ENCODE measurements at regions of chr15 and their contacts with region 1.

Region 1: GRCh38 chr15:64809649-64810496 is 15.6 kb downstream of the PIF1 start:
- DNase-seq: peak; percentile 79
- H3K4me3 Mint-ChIP-seq: no peak overlapping the region
- H3K27ac Mint-ChIP-seq: no peak overlapping the region
- H3K4me1 Mint-ChIP-seq: no peaks in the 10 kb centered on the region
- H3K27me3 Mint-ChIP-seq: no peaks in the 10 kb centered on the region
- CTCF ChIP-seq: peak; percentile 88

Region 2: DNA sequence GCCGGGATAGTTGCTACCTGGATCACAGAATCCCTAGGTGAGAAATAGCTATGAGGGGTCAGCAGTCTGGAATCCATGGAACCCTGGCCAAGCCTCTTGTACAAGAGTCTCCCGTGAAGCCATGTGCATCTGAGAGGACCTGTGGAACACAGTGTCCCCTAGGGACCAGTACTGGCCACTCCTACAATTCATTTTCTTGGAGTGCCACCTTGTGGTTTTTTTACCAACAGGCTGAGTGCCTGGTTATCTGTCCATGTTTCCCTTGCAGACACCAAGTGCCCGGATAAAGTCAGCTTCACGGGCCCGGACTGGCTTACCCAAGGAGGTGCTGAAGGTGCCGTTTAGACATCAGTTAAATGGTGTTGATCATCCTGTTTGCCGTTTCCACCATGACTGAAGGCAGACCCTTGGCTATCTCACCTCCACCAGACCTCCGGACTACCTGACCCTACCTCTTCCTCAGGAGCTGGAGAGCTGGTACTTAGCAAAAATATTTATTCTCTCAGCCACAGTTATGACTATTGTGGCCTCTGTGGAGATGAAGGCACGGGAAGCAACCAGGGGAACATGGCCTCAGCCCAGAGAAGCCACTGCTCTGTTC is 128.3 kb before region 1 on chr15:
- CTCF ChIA-PET with region 1: interaction called, 41 read pairs
- POLR2A ChIA-PET with region 1: no interaction called
- intact Hi-C with region 1: loop called (anchors 1 kb)
- DNase-seq: peak; percentile 68
- H3K4me3 Mint-ChIP-seq: no peak overlapping the region
- H3K27ac Mint-ChIP-seq: no peak overlapping the region
- H3K4me1 Mint-ChIP-seq: no peaks in the 10 kb centered on the region
- H3K27me3 Mint-ChIP-seq: no peaks in the 10 kb centered on the region
- CTCF ChIP-seq: peak; percentile 72

Region 3: DNA sequence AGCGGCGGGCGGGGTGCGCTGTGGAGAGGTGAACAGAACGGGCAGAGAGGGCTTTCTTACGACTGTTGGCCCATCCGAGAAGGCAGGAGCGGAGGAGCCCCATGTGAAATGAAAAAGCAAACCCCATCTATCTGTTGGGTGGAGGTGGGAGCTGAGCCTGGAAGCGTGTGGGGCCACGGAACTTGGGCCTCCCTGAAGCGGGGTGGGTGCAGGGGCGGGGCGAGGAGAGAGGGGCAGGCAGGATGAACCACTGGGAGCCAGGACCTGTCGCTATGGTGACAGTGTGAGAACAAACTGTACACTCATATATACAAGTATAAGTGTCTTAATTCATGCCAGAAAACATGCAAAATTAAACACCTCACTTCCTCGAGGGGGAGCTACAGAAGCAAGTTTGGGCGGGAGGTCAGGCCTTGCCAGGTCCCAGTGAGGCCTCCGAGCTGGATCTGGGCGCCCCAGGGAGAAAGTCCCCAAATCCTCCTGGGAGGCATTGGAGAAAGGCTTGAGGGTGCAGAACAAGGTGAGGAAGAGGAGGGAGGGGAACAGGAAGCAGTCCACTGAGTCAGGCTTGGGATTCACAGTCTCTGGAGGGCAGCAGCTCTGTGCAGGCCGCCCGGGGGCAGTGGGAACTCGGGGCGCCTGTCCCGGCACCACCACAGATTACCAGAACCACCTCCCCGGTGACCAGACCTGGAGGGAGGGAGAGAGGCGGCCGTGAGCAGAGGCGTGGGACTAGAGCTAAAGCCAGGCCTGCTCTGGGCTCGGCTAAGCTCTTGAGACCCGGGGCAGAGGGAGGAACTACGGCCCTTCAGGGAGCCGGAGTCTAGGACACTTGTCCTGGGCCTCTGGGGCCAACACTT is 69.3 kb before region 1 on chr15:
- CTCF ChIA-PET with region 1: interaction called, 45 read pairs
- POLR2A ChIA-PET with region 1: no interaction called
- intact Hi-C with region 1: no loop called
- DNase-seq: peak; percentile 66
- H3K4me3 Mint-ChIP-seq: no peak overlapping the region
- H3K27ac Mint-ChIP-seq: no peak overlapping the region
- H3K4me1 Mint-ChIP-seq: no peaks in the 10 kb centered on the region
- H3K27me3 Mint-ChIP-seq: no peaks in the 10 kb centered on the region
- CTCF ChIP-seq: no peak

Region 4: DNA sequence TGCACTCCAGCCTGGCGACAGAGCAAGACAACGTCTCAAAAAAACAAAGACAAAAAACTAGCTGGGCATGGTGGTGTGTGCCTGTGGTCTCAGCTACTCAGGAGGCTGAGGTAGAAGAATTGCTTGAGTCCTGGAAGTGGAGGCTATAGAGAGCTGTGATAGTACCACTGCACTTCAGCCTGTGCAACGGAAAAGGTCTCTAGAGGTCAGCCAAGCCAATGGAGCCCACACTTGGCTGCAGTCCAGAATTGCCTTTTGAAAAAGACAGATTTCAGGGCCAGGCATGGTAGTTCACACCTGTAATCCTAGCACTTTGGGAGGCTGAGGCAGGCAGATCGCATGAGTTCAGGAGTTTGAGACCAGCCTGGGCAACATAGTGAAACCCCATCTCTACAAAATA is 26.1 kb before region 1 on chr15:
- CTCF ChIA-PET with region 1: interaction called, 10 read pairs
- POLR2A ChIA-PET with region 1: no interaction called
- intact Hi-C with region 1: no loop called
- DNase-seq: no peak
- H3K4me3 Mint-ChIP-seq: no peak overlapping the region
- H3K27ac Mint-ChIP-seq: no peak overlapping the region
- H3K4me1 Mint-ChIP-seq: no peaks in the 10 kb centered on the region
- H3K27me3 Mint-ChIP-seq: no peaks in the 10 kb centered on the region
- CTCF ChIP-seq: no peak

Region 5: GRCh38 chr15:64825431-64826294 is 15.8 kb after region 1 on chr15 and contains the start of gene PIF1:
- CTCF ChIA-PET with region 1: interaction called, 21 read pairs
- POLR2A ChIA-PET with region 1: interaction called, 4 read pairs
- intact Hi-C with region 1: no loop called
- DNase-seq: peak; percentile 99
- H3K4me3 Mint-ChIP-seq: peak within 1 kb of the TSS; percentile 71
- H3K27ac Mint-ChIP-seq: peak within 1 kb of the TSS; percentile 83
- H3K4me1 Mint-ChIP-seq: peaks cover 5% of the 10 kb centered on the region
- H3K27me3 Mint-ChIP-seq: no peaks in the 10 kb centered on the region
- CTCF ChIP-seq: no peak
- total RNA-seq, gene PIF1: 8.1 and 13.4 TPM in 2 replicates

Region 6: GRCh38 chr15:64836023-64836536 is 26.2 kb after region 1 on chr15:
- CTCF ChIA-PET with region 1: interaction called, 11 read pairs
- POLR2A ChIA-PET with region 1: no interaction called
- intact Hi-C with region 1: no loop called
- DNase-seq: no peak
- H3K4me3 Mint-ChIP-seq: no peak overlapping the region
- H3K27ac Mint-ChIP-seq: no peak overlapping the region
- H3K4me1 Mint-ChIP-seq: peaks cover 6% of the 10 kb centered on the region
- H3K27me3 Mint-ChIP-seq: no peaks in the 10 kb centered on the region
- CTCF ChIP-seq: no peak

Measured in MCF 10A (cell line).